Mammary epithelial cell (primary cell): ENCODE measurements at regions of chr3 and their contacts with region 1.

Region 1: DNA sequence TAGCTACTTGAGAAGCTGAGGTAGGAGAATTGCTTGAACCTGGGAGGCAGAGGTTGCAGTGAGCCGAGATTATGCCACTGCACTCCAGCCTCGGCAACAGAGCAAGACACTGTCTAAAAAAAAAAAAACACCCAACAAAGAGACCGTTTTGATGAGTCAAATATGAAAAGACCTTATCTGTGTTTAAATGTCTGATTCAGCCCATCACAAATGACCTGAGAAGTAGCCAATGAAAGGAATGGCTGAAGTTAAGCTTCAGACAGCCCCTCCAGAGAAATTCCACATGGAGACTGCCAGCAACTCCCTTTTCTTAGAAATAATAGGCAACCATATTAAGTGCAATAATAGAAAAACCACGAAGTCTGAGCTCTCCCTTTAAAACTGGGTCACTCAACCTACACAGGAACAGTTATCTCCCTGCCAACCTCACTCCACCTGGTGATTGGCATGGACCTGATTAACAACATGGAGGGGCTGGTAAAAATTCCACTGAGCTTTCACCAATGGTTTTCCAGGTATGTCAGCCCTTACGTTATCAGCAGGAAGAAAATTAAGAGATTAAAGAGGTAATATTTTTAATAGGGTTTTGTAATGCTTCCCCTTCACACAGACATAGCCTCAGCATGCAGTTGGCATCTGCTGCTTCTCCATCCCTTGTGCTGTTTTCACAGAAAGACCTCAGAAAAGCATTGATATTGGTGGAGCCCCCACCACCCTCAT is 238.1 kb upstream of the STT3B start:
- DNase-seq: no peak
- H3K4me3 ChIP-seq: no peak overlapping the region
- H3K27ac ChIP-seq: no peak overlapping the region
- H3K4me1 ChIP-seq: peaks cover 24% of the 10 kb centered on the region
- H3K27me3 ChIP-seq: no peaks in the 10 kb centered on the region
- CTCF ChIP-seq: no peak

Region 2: DNA sequence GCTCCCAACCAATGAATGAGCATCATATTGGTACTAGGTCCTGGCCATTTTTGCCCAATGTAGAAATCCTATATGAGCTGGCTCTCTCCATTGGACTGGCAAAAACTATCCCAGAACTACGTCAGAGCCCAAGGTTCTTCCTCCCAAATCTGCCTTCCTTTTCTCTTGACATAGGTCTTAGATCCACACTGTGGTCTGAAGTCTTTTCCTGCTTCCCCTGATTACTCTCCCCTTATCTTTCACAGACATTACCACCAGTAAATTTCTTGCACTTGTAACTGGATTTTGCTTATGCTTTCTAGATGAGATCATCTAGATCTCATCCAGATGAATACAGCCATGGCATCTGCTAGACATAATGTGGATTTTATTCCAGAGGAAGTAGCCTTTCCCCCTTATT is 258.9 kb before region 1 on chr3:
- CTCF ChIA-PET with region 1: no interaction called
- dilution Hi-C with region 1: no loop called
- in situ Hi-C with region 1: no loop called
- intact Hi-C with region 1: no loop called
- DNase-seq: no peak
- H3K4me3 ChIP-seq: no peak overlapping the region
- H3K27ac ChIP-seq: no peak overlapping the region
- H3K4me1 ChIP-seq: peaks cover 13% of the 10 kb centered on the region
- H3K27me3 ChIP-seq: no peaks in the 10 kb centered on the region
- CTCF ChIP-seq: no peak

Region 3: DNA sequence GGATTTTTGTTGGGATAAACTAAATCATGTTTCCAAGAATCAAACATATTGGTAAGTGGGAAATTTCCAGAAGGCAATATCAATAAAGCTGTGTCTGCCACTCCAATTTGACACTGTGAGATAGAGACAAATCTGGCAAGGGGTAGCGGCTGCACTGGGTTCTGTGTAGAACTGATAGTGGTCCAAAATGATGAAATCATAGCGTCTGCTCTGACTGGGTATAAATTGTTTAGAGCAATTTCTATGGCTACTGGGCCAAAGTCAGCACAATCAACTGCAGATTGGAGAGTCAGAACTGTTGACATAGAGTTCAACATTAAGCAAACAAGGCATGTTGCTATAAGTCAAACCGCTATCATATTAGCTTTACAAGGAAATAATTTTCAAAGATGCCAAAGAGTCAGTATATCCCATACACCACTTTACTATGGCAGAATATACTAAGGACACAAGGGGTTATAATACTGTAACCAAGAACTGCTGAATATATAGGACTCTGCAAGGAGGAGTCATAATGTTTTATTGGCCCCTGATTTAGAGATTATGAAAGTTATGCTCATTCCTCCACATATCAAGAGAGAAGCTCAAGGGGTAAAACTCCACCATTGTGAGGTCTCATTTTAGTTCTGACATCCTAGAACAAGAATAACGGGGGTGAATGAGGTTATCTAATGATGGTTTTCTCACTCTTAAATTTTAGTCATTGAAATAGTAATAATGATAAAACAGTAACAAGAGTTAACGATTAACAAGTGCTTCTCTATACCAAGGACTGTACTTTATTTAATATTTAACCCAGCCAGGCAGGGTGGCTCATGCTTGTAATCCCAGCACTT is 90.4 kb before region 1 on chr3:
- CTCF ChIA-PET with region 1: no interaction called
- dilution Hi-C with region 1: loop called (anchors 5 kb)
- in situ Hi-C with region 1: no loop called
- intact Hi-C with region 1: no loop called
- DNase-seq: no peak
- H3K4me3 ChIP-seq: no peak overlapping the region
- H3K27ac ChIP-seq: no peak overlapping the region
- H3K4me1 ChIP-seq: no peaks in the 10 kb centered on the region
- H3K27me3 ChIP-seq: no peaks in the 10 kb centered on the region
- CTCF ChIP-seq: no peak

Region 4: DNA sequence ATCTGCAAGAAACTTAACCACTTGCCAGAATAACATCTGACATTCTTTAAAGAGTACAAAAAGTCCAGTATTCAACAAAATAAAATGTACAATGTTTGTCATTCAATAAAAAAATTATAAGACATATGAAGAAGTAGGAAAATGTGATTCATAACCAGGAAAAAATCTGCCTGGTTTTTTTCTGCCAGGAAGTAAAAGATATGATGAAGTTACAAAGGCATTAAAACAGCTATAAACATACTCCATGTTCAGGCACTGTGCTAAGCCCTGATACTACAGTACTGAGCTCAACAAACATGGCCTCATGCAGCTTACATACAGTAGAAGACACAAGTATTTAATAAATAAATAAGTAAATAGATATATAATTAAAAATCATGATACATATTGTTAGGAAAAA is 59.8 kb after region 1 on chr3:
- CTCF ChIA-PET with region 1: no interaction called
- dilution Hi-C with region 1: loop called (anchors 5 kb)
- in situ Hi-C with region 1: no loop called
- intact Hi-C with region 1: no loop called
- DNase-seq: no peak
- H3K4me3 ChIP-seq: no peak overlapping the region
- H3K27ac ChIP-seq: no peak overlapping the region
- H3K4me1 ChIP-seq: peaks cover 7% of the 10 kb centered on the region
- H3K27me3 ChIP-seq: no peaks in the 10 kb centered on the region
- CTCF ChIP-seq: no peak

Region 5: DNA sequence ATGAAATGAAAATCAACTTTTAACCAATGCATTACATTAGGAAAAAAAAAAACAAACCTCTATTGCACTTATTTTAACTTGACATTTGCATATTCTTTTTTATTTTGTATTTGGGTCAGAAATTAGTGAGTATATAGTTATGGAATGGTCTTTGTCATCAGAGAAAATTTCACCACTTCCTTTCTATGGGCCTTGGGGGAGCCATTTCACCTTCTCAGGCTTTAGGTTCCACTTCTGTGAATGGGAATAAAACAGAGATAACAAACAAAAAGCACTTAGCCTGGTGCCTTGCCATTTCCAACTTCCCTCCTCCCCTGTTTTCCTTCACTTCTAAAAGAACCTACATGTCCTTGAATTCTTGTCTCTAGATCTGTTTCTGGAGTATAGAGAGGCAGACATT is 70.1 kb after region 1 on chr3:
- CTCF ChIA-PET with region 1: no interaction called
- dilution Hi-C with region 1: no loop called
- in situ Hi-C with region 1: no loop called
- intact Hi-C with region 1: no loop called
- DNase-seq: peak; percentile 40
- H3K4me3 ChIP-seq: no peak overlapping the region
- H3K27ac ChIP-seq: no peak overlapping the region
- H3K4me1 ChIP-seq: peaks cover 13% of the 10 kb centered on the region
- H3K27me3 ChIP-seq: no peaks in the 10 kb centered on the region
- CTCF ChIP-seq: peak in 1 of 2 donors; percentile 28

Region 6: DNA sequence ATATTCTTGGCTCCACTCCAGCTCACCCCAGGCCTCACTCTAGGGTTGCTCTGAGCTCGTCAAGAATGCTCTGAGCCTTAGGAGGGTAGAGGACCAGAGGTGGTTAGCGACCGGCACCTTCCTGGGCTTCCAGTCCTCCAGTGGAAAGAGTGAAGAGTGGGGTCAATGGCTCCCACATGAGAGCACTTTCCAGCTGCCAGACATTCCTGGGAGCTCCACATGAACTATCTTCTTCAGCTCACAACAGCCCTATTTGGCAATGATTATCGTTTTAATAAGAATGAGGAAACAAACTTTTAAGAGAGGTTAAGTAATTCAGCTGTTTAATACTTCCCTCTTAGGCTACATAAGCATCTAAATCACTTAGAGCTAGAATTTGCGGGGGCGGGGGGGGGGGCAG is 377.4 kb after region 1 on chr3:
- CTCF ChIA-PET with region 1: no interaction called
- dilution Hi-C with region 1: no loop called
- in situ Hi-C with region 1: no loop called
- intact Hi-C with region 1: no loop called
- DNase-seq: no peak
- H3K4me3 ChIP-seq: no peak overlapping the region
- H3K27ac ChIP-seq: no peak overlapping the region
- H3K4me1 ChIP-seq: no peaks in the 10 kb centered on the region
- H3K27me3 ChIP-seq: no peaks in the 10 kb centered on the region
- CTCF ChIP-seq: no peak